ENCODE measurements at regions of chr18 and their contacts with region 1.

Region 1: DNA sequence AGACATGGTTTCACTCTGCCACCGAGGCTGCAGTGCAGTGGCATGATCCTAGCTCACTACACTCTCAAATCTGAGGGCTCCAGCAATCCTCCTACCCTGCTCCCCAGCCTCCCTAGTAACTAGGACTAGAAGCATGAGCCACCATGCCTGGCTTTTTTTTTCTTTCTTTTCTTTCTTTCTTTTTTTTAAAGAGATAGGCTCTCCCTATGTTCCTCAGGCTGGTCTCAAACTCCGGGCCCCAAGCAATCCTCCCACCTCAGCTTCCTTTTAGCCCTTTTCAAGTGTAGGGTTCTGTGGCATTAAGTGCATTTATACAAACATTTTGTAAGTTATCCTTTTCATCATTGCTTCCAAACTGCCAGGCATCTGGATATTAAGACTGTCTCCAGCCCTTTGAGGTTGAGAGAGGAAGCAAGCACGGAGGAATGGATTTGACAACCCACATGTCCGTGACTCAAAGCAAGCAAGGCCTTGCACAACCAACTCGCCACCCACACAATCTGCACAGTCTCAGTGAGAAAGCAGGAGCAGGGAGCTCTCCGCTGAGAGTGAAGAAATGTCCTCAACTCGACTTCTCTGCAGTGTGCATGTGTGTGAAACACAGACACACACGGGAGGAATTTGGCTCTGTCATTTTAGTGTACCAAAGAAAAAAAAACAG is 65.6 kb downstream of the ATP8B1 start:
- DNase-seq: peak; percentile 91
- H3K4me3 ChIP-seq: no peak overlapping the region
- H3K27ac ChIP-seq: peak overlapping the region; percentile 57 to 79 (median 68)
- H3K4me1 ChIP-seq: peaks cover 0 to 26% (median 12%) of the 10 kb centered on the region in 4 donors
- H3K27me3 ChIP-seq: no peaks in the 10 kb centered on the region
- CTCF ChIP-seq: no peak
- EP300 ChIP-seq: peak in 3 of 4 donors; percentile 3 to 79 (median 63)
- POLR2A ChIP-seq: no peak

Region 2: GRCh38 chr18:57660961-57661360 is 76.6 kb before region 1 on chr18:
- intact Hi-C with region 1: no loop called
- DNase-seq: no peak
- H3K4me3 ChIP-seq: no peak overlapping the region
- H3K27ac ChIP-seq: peak overlapping the region in 1 of 4 donors; percentile 25
- H3K4me1 ChIP-seq: peaks cover 0 to 5% (median 3%) of the 10 kb centered on the region in 4 donors
- H3K27me3 ChIP-seq: no peaks in the 10 kb centered on the region
- CTCF ChIP-seq: no peak
- EP300 ChIP-seq: no peak
- POLR2A ChIP-seq: no peak

Region 3: GRCh38 chr18:57803103-57803969 is 65.8 kb after region 1 on chr18 and contains the start of gene ATP8B1:
- intact Hi-C with region 1: loop called (anchors 5 kb)
- DNase-seq: peak; percentile 84
- H3K4me3 ChIP-seq: peak within 1 kb of the TSS; percentile 68 to 85 (median 75)
- H3K27ac ChIP-seq: peak within 1 kb of the TSS; percentile 71 to 92 (median 86)
- H3K4me1 ChIP-seq: peaks cover 0 to 49% (median 28%) of the 10 kb centered on the region in 4 donors
- H3K27me3 ChIP-seq: peaks cover 0 to 6% (median 0%) of the 10 kb centered on the region in 3 donors
- CTCF ChIP-seq: no peak
- EP300 ChIP-seq: no peak
- POLR2A ChIP-seq: peak; percentile 66 to 67
- total RNA-seq, gene ATP8B1: 8.1 to 18.0 (median 11.6) TPM

Region 4: DNA sequence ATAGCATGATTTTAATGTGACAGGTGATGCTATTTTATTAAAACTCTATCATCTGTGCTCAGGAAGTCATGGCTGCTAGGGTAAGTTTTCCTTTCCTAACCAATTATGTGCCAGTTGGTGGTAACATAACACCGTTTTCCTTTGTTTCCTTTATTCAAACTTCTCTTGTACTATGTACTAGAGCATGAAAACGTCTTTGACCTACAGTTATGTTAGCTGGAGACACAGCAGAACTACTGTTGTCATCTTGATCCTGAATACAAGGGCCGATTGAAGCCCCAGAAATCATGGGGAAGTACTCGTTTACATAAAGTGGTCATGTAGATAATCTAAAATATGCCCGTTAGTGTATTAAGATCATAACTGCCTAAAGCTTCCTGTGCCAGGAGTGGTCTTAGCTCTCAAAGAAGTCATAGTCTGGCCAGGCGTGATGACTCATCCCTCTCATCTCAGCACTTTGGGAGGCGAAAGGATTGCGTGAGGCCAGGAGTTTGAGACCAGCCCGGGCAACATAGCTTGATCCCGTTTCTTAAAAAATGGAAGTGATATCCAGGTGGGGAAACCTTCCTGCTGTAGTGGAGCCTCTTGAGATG is 327.0 kb after region 1 on chr18:
- intact Hi-C with region 1: no loop called
- DNase-seq: no peak
- H3K4me3 ChIP-seq: no peak overlapping the region
- H3K27ac ChIP-seq: no peak overlapping the region
- H3K4me1 ChIP-seq: no peaks in the 10 kb centered on the region
- H3K27me3 ChIP-seq: no peaks in the 10 kb centered on the region
- CTCF ChIP-seq: no peak
- EP300 ChIP-seq: no peak
- POLR2A ChIP-seq: no peak